Mammary epithelial cell (primary cell): ENCODE measurements at regions of chr5 and their contacts with region 1.

Region 1: DNA sequence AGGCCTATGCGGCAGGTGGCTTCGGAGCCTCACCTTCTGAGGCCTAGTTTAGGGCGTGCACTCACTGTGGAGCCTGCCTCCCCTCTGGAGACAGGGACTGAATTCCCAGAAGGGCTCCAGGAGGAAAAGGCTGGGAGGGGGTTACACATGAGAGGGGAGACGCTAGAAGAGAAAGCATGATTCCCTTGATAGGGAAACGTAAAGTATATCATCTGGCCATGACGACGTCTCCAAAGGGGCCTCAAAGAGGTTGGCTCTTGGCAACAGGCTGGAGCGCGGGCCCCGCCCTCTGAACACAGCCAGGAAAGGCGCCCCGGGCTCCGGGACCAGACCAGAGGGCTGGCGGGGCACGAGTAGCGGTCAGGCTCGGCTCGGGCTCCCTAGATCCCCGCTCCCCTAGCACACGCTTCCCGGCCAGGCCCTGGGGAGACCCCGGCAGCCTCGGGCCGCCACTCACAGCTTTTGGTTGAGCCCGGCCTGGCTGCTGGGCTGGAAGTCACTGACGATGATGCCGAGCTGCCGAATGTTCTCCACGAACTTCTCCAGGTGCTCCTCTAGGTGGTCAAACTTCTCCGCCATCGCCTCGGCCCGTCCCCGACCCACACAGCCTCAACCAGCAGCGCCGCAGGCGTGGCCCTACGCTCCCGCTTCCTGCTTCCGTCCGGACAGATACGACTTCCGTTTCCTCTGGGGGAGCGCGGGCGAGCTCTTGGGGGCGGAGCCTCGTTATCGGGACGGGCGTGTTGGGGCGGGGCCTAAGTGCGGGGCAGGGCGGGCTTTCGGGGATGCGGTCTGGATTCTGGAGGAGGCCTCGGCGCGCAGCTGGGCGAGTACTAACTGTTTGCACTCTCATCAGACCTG is at the start of gene MED10:
- DNase-seq: peak; percentile 88
- H3K4me3 ChIP-seq: peak within 1 kb of the TSS; percentile 80 to 95 (median 91)
- H3K27ac ChIP-seq: peak within 1 kb of the TSS; percentile 74
- H3K4me1 ChIP-seq: peaks cover 13% of the 10 kb centered on the region
- H3K27me3 ChIP-seq: no peaks in the 10 kb centered on the region
- CTCF ChIP-seq: no peak
- total RNA-seq, gene MED10: 17.0 to 59.5 TPM

Region 2: DNA sequence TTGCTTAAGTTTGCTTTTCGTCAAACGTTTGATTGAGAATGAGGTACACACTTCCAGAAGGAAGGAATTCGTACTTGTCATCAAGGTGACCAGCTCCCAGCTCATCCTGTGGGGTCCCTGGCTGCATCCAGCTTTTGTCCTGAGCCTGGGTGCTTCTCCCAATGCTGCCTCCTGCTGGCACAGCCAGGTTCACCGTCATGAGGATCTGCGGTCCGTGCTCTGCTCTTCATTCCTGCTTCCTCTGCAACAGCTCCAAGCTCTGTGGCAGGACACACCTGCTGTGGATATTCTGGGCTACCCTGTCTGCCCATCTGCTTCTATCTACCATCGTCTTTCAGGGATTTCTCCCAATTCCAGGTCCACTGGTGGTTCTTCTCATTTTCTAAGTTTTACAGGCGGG is 57.2 kb after region 1 on chr5:
- CTCF ChIA-PET with region 1: no interaction called
- dilution Hi-C with region 1: no loop called
- in situ Hi-C with region 1: no loop called
- intact Hi-C with region 1: loop called (anchors 10 kb)
- DNase-seq: no peak
- H3K4me3 ChIP-seq: no peak overlapping the region
- H3K27ac ChIP-seq: no peak overlapping the region
- H3K4me1 ChIP-seq: peaks cover 2% of the 10 kb centered on the region
- H3K27me3 ChIP-seq: peaks cover 1% of the 10 kb centered on the region
- CTCF ChIP-seq: peak in 1 of 2 donors; percentile 26

Region 3: DNA sequence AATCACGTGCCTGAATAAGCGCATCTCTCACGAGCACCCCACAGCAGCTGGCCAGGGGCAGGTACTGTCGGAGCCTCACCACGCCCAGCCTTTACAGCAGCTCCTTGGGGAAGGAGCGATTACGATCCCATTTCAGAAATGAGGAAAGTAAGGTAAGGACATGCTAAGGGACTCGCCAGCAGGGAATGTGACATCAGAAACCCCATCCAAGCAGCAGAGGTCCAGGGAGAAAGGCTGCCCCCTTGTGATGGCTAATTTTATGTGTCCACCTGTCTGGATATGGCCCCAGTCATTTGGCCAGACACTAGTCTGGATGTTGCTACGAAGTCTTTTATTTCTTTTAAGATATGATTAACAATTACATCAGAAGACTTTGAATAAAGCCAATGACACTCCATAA is 147.8 kb after region 1 on chr5:
- CTCF ChIA-PET with region 1: no interaction called
- dilution Hi-C with region 1: no loop called
- in situ Hi-C with region 1: no loop called
- intact Hi-C with region 1: loop called (anchors 1 kb)
- DNase-seq: no peak
- H3K4me3 ChIP-seq: no peak overlapping the region
- H3K27ac ChIP-seq: no peak overlapping the region
- H3K4me1 ChIP-seq: no peaks in the 10 kb centered on the region
- H3K27me3 ChIP-seq: no peaks in the 10 kb centered on the region
- CTCF ChIP-seq: peak; percentile 6 to 41

Region 4: GRCh38 chr5:6858419-6858818 is 480.3 kb after region 1 on chr5:
- CTCF ChIA-PET with region 1: no interaction called
- dilution Hi-C with region 1: no loop called
- in situ Hi-C with region 1: no loop called
- intact Hi-C with region 1: no loop called
- DNase-seq: no peak
- H3K4me3 ChIP-seq: no peak overlapping the region
- H3K27ac ChIP-seq: no peak overlapping the region
- H3K4me1 ChIP-seq: no peaks in the 10 kb centered on the region
- H3K27me3 ChIP-seq: no peaks in the 10 kb centered on the region
- CTCF ChIP-seq: no peak